ENCODE measurements at regions of chr3 and their contacts with region 1.

Region 1: GRCh38 chr3:12135029-12135657 is 23.6 kb downstream of the TIMP4 start:
- H3K4me3 ChIP-seq: no peak overlapping the region
- H3K27ac ChIP-seq: no peak overlapping the region
- H3K4me1 ChIP-seq: peaks cover 2% of the 10 kb centered on the region; the same call in 1 of the 2 replicates
- CTCF ChIP-seq: peak; percentile 72

Region 2: GRCh38 chr3:12060139-12060845 is 74.9 kb before region 1 on chr3:
- CTCF ChIA-PET with region 1: no interaction called
- POLR2A ChIA-PET with region 1: no interaction called
- H3K4me3 ChIP-seq: no peak overlapping the region
- H3K27ac ChIP-seq: no peak overlapping the region
- H3K4me1 ChIP-seq: no peaks in the 10 kb centered on the region
- CTCF ChIP-seq: no peak

Region 3: DNA sequence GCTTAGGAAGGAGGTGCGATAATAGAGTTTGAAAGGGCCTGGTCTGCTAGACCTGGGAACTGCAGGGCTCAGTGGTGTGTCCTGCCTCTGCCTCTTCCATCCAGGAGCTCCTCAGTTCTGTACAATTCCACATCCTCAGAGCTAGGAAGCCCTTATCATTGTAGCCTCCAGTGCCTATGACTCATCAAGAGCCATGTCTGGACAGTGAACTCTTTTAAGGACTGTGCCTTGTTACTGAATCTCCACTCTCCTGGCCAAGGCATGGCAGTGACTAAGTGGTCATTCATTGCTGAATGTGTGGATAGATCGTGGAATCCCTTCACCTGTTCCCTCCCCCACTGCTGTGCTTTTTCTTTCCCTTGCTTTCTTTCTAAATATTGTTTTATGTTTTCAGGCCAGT is 20.7 kb after region 1 on chr3:
- CTCF ChIA-PET with region 1: interaction called, 13 read pairs
- POLR2A ChIA-PET with region 1: no interaction called
- H3K4me3 ChIP-seq: no peak overlapping the region
- H3K27ac ChIP-seq: no peak overlapping the region
- H3K4me1 ChIP-seq: no peaks in the 10 kb centered on the region; the same call in 1 of the 2 replicates
- CTCF ChIP-seq: no peak

Region 4: GRCh38 chr3:12175844-12176453 is 40.8 kb after region 1 on chr3:
- CTCF ChIA-PET with region 1: interaction called, 72 read pairs
- POLR2A ChIA-PET with region 1: no interaction called
- H3K4me3 ChIP-seq: no peak overlapping the region
- H3K27ac ChIP-seq: no peak overlapping the region
- H3K4me1 ChIP-seq: no peaks in the 10 kb centered on the region; the same call in 1 of the 2 replicates
- CTCF ChIP-seq: peak; percentile 74

Region 5: DNA sequence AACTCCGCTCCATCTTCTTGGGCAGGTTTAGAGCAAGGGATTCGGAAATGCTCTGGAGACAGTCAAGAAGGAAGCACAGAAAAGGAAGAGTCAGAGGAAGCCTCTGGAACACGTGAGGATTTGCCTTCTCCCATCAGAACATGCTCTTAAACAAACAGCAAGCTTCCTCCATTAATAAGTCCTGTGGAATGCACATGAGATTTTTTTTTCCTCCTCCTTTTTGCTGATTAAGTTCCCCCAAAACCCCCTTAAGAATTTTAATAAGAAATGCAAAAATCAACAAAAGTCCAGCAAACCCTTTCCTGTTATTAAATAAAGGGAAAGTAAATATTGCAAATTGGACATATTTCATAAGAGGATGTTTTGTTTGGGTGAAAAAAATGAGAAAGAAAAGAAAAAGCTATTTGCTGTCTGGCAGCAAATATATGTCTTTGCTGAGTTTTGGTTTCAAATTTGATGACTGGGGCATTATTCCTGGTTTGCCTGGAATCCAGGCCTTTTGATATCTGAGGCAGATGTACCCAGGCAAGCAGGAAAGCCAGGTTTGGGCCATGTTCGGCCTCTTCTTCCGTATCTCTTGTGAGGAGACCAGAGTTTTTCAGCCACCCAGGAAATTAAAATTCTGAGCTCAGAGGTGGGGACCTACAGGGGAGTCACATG is 341.2 kb after region 1 on chr3:
- CTCF ChIA-PET with region 1: interaction called, 130 read pairs
- POLR2A ChIA-PET with region 1: no interaction called
- H3K4me3 ChIP-seq: no peak overlapping the region
- H3K27ac ChIP-seq: no peak overlapping the region
- H3K4me1 ChIP-seq: no peaks in the 10 kb centered on the region
- CTCF ChIP-seq: no peak

Region 6: GRCh38 chr3:12484198-12484974 is 349.2 kb after region 1 on chr3 and contains the start of gene TSEN2:
- CTCF ChIA-PET with region 1: interaction called, 130 read pairs
- POLR2A ChIA-PET with region 1: no interaction called
- H3K4me3 ChIP-seq: peak within 1 kb of the TSS; percentile 79
- H3K27ac ChIP-seq: peak within 1 kb of the TSS; percentile 69
- H3K4me1 ChIP-seq: peaks cover 12% of the 10 kb centered on the region; the same call in 1 of the 2 replicates
- CTCF ChIP-seq: peak; percentile 49

Measured in HEK293 (cell line).